Left cardiac atrium (tissue), 4 donors: ENCODE measurements at regions of chr7 and their contacts with region 1.

Region 1: DNA sequence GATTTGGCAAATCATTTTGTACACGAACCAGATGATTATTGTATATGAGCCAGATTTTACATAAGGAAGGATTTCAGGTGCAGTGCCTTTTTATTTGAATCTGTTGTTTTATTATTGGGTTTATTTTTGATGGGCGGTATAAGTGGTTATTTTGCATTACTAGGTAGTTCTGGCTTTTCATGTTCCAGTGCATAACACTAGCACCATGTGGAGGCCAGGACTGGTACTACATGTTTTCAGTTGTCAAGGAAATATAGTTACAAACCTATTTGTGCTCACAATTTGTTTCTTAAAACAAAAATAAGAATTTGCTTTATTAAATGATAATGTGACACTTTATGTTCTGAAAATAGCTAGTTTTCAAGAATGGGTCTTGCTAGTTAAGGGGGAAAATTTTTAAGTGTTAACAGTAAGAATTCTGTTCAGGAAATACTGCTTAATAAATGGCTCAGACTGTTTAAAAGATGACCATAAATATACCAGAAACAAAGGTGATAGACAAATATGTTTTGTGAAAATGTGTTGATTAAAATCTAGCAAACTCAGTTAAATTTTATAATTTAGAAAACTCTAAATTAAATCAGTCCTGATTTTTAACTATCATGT is 7.1 kb upstream of the SEMA3E start:
- DNase-seq: no peak
- ATAC-seq: no peak

Region 2: DNA sequence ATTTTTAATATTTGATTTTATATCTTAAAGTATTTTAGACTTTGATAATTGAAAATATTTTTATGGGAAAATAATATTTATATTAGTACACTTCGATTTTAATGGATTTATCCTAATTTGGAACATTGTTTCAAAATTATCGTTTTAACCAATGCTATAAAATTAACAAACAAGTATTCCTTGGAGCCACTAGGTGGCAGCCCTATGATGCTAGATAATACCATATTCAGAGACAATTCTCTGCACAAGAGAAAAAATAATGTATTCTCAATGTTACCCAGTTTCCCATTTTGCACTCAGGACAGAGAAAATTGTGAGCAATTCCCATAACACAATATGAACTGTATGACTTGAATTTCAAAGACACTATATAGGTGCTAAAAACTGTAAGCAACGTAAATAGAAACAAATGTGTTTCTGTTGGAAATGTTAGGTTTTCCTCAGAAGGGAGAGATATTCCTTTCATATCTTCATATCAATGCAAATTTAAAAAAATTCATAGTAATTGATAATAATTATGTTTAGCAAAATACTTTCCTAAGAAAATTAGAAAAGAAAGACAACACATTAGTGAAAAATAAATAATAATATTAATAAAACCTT is 245.0 kb before region 1 on chr7:
- intact Hi-C with region 1: loop called in 1 of 2 experiments (anchors 5 kb)
- DNase-seq: no peak
- ATAC-seq: no peak

Region 3: GRCh38 chr7:84025332-84025927 is 369.4 kb after region 1 on chr7:
- intact Hi-C with region 1: no loop called
- DNase-seq: peak; percentile 21
- ATAC-seq: peak; percentile 72 to 91